Caco-2 (cell line): ENCODE measurements at regions of chr2 and their contacts with region 1.

Region 1: GRCh38 chr2:127526149-127527000 is at the start of gene IWS1:
- DNase-seq: peak; percentile 96 to 97
- H3K4me3 ChIP-seq: peak within 1 kb of the TSS; percentile 76
- H3K4me3 Mint-ChIP-seq: peak within 1 kb of the TSS; percentile 89
- H3K27ac Mint-ChIP-seq: peak within 1 kb of the TSS; percentile 95
- H3K4me1 ChIP-seq: peaks cover 29% of the 10 kb centered on the region
- H3K4me1 Mint-ChIP-seq: peaks cover 19% of the 10 kb centered on the region
- H3K27me3 ChIP-seq: no peaks in the 10 kb centered on the region
- H3K27me3 Mint-ChIP-seq: no peaks in the 10 kb centered on the region
- CTCF ChIP-seq: peak in 1 of 2 experiments; percentile 24
- total RNA-seq, gene IWS1: 56.0 and 63.7 TPM in 2 replicates

Region 2: DNA sequence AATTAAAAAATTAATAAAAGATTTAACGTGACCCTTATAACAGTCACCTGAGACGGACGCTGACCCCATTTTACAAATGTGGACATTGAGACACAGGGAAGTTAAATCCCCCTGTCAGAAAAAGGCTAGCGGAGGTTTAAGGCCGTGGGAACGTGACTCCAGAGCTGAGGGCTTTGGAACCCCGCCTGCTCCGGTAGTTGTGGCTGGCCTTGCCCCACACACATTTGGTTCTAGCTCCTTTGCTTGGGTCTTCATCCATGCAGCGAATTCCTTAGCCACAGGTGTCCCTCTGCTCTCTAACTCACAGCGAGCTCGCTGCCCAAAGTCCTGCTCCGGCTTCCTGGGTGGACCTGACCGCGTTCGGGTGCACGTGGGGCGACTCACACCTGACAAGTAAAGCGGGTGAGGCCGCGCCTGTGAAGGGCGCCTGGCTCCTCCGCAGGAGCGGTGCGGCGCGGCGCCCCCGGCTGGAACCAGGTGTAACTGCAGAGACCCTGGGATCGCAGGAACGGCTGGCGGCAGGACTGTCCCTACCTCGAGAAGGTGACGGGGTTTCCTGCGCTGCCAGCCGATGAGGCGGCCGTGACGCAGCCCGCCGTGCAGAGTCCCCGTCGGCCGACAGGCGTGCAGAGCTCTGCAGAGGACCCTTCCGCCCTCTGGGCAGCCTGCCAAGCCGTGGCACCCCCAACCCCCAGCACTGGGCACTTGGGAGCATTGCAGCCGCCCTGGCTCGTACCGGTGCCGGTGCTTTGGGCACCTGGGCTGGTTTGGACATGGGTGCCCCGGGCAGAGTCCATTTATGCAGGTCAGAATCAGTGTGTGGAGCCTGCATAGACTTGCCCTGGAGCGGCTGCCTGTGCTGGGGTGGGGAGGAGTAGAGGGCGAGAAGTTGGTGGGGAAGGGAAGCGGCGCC is 110.5 kb before region 1 on chr2:
- CTCF ChIA-PET with region 1: no interaction called
- POLR2A ChIA-PET with region 1: no interaction called
- intact Hi-C with region 1: no loop called
- DNase-seq: peak; percentile 86 to 92
- H3K4me3 ChIP-seq: peak overlapping the region; percentile 47
- H3K4me3 Mint-ChIP-seq: peak overlapping the region; percentile 76
- H3K27ac Mint-ChIP-seq: peak overlapping the region; percentile 46
- H3K4me1 ChIP-seq: peaks cover 36% of the 10 kb centered on the region
- H3K4me1 Mint-ChIP-seq: peaks cover 35% of the 10 kb centered on the region
- H3K27me3 ChIP-seq: no peaks in the 10 kb centered on the region
- H3K27me3 Mint-ChIP-seq: no peaks in the 10 kb centered on the region
- CTCF ChIP-seq: peak; percentile 89 to 92

Region 3: GRCh38 chr2:127541809-127542208 is 15.4 kb after region 1 on chr2:
- CTCF ChIA-PET with region 1: no interaction called
- POLR2A ChIA-PET with region 1: interaction called, 11 read pairs
- intact Hi-C with region 1: loop called (anchors 1 kb)
- DNase-seq: no peak
- H3K4me3 ChIP-seq: no peak overlapping the region
- H3K4me3 Mint-ChIP-seq: no peak overlapping the region
- H3K27ac Mint-ChIP-seq: peak overlapping the region; percentile 49
- H3K4me1 ChIP-seq: peaks cover 28% of the 10 kb centered on the region
- H3K4me1 Mint-ChIP-seq: peaks cover 15% of the 10 kb centered on the region
- H3K27me3 ChIP-seq: no peaks in the 10 kb centered on the region
- H3K27me3 Mint-ChIP-seq: peaks cover 1% of the 10 kb centered on the region
- CTCF ChIP-seq: no peak

Region 4: GRCh38 chr2:127649684-127650040 is 123.3 kb after region 1 on chr2:
- CTCF ChIA-PET with region 1: interaction called, 4 read pairs
- POLR2A ChIA-PET with region 1: interaction called, 4 read pairs
- intact Hi-C with region 1: loop called (anchors 2 kb)
- DNase-seq: peak; percentile 87 to 90
- H3K4me3 ChIP-seq: no peak overlapping the region
- H3K4me3 Mint-ChIP-seq: no peak overlapping the region
- H3K27ac Mint-ChIP-seq: no peak overlapping the region
- H3K4me1 ChIP-seq: peaks cover 11% of the 10 kb centered on the region
- H3K4me1 Mint-ChIP-seq: no peaks in the 10 kb centered on the region
- H3K27me3 ChIP-seq: no peaks in the 10 kb centered on the region
- H3K27me3 Mint-ChIP-seq: no peaks in the 10 kb centered on the region
- CTCF ChIP-seq: peak; percentile 82 to 86

Region 5: DNA sequence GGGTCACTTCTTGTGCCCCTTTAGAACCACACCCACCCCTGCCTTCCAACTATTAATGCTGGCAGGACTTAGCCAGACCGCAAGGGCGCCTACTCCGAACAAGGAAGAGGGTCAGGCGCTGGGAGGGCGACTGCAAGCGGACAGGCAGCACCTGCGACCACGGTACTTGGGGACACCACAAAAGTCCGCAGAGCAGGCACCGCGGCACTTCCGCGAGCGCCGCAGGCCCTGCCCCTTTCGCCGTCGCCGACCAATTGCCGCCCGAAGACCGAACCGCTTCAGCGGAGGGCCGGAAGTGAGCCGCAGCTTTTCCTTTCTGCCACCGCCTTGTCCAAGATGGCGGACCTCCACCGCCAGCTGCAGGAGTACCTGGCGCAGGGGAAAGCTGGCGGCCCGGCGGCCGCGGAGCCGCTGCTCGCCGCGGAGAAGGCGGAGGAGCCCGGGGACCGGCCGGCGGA is 174.8 kb after region 1 on chr2 and contains the start of gene SFT2D3:
- CTCF ChIA-PET with region 1: no interaction called
- POLR2A ChIA-PET with region 1: interaction called, 27 read pairs
- intact Hi-C with region 1: loop called (anchors 5 kb)
- DNase-seq: peak; percentile 95 to 96
- H3K4me3 ChIP-seq: peak within 1 kb of the TSS; percentile 51
- H3K4me3 Mint-ChIP-seq: peak within 1 kb of the TSS; percentile 98
- H3K27ac Mint-ChIP-seq: peak within 1 kb of the TSS; percentile 99
- H3K4me1 ChIP-seq: peaks cover 10% of the 10 kb centered on the region
- H3K4me1 Mint-ChIP-seq: peaks cover 16% of the 10 kb centered on the region
- H3K27me3 ChIP-seq: no peaks in the 10 kb centered on the region
- H3K27me3 Mint-ChIP-seq: no peaks in the 10 kb centered on the region
- CTCF ChIP-seq: no peak
- total RNA-seq, gene SFT2D3: 12.0 and 12.2 TPM in 2 replicates